Activated CD8-positive, alpha-beta T cell treated with anti-CD3 and anti-CD28 coated beads for 36 hours (primary cell): ENCODE measurements at regions of chr10 and their contacts with region 1.

Region 1: DNA sequence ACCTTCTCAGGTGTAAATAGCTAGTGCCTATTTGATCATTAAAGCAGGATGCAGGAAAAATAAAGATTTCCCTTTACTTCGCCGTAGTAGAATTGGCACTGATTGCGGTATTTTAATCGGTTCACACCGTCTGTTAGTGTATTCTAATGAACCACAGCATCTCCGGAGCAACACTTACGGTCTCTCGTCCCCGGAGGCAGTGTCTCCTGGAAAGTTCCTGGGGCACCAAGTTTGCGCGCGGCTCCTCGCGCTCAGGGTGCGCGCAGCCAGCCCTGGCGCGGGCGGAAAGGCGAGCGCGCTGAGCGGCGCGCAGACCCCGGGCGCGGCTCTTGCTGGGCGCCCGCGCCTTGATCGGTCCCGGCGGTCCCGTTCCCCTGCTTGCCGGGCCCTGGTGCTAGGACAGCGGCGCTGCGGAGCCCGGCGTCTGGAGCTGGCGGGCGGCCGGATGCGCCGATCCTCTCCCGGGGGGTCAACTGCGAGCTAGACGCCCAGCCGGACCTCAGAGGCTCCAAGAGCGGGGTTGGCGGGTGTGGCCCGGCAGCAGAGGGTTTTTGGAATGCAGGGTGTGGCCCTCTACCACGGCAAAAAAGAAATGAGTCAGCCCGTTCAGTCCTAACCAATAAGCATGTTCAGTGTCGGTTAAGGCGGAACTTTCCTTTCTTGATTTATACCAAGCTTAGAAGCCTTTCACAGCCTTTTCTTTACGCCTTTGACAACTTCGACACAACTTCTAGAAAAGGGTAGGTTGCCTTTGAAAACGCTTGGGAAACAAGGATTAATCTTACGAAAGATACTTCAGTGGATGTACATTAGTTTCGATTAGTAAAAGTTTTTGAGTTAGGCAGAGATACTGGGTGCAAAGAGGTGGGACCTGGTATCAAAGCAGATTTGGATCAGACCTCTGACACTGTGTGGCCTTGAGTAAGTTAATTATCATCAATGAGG is 166.8 kb upstream of the ASAH2 start:
- DNase-seq: peak; percentile 62
- ATAC-seq: peak; percentile 88
- H3K4me3 Mint-ChIP-seq: peak overlapping the region; percentile 77
- H3K27ac Mint-ChIP-seq: peak overlapping the region; percentile 64
- H3K4me1 Mint-ChIP-seq: peaks cover 34% of the 10 kb centered on the region
- H3K27me3 Mint-ChIP-seq: no peaks in the 10 kb centered on the region
- CTCF ChIP-seq: no peak

Region 2: GRCh38 chr10:50291261-50291850 is 126.8 kb before region 1 on chr10:
- CTCF ChIA-PET with region 1: no interaction called
- POLR2A ChIA-PET with region 1: no interaction called
- intact Hi-C with region 1: no loop called
- DNase-seq: no peak
- ATAC-seq: peak; percentile 34
- H3K4me3 Mint-ChIP-seq: no peak overlapping the region
- H3K27ac Mint-ChIP-seq: no peak overlapping the region
- H3K4me1 Mint-ChIP-seq: no peaks in the 10 kb centered on the region
- H3K27me3 Mint-ChIP-seq: no peaks in the 10 kb centered on the region
- CTCF ChIP-seq: no peak

Region 3: GRCh38 chr10:50367732-50368131 is 50.4 kb before region 1 on chr10:
- CTCF ChIA-PET with region 1: interaction called, 13 read pairs
- POLR2A ChIA-PET with region 1: no interaction called
- intact Hi-C with region 1: no loop called
- DNase-seq: peak; percentile 27
- ATAC-seq: no peak
- H3K4me3 Mint-ChIP-seq: no peak overlapping the region
- H3K27ac Mint-ChIP-seq: no peak overlapping the region
- H3K4me1 Mint-ChIP-seq: peaks cover 2% of the 10 kb centered on the region
- H3K27me3 Mint-ChIP-seq: no peaks in the 10 kb centered on the region
- CTCF ChIP-seq: peak; percentile 35